Common myeloid progenitor, CD34-positive (primary cell): ENCODE measurements at regions of chr20 and their contacts with region 1.

Region 1: DNA sequence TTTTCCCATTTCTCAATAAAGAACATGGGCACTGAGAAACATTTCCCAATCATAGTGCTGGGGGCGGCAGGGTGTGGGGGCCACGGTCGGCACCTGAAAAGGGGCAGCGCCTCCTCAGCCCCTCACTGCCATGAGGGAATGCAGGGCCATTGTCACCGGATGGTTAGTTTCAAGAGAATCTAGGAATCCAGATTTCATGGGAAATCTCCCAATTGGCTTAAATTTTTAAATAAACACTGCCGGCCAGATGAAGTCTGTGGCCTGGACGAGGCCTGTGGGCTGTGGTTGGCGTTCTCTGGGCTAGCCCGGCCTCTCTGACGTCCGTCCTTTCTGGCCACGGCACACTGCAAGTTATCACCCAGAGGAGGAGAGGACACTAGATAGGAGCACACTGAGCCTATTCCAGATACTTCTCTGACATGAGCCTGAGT is 25.6 kb downstream of the MANBAL start:
- DNase-seq: no peak
- H3K4me3 ChIP-seq: no peak overlapping the region
- H3K27ac ChIP-seq: peak overlapping the region; percentile 52 to 82
- H3K4me1 ChIP-seq: peaks cover 6 to 55% (median 43%) of the 10 kb centered on the region in 4 experiments
- H3K27me3 ChIP-seq: no peaks in the 10 kb centered on the region

Region 2: DNA sequence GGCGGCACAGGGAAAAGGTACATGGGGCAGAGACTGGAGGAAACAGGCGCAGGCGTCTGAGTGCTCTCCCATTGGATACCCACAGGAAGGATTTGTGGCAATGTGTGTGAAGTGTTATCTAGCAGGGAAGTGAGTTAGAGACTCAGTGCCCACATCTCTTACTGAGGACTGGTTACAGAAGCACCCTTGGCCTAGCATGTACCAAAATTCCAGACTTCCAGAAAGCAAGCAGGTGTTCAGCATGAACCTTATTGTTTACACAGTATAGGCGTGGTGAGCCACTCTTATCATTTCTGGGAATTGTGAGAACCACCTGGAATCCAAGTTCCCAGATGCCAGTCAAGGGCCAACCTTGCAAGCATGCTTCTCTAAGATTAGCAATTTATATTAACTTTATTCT is 11.4 kb before region 1 on chr20:
- CTCF ChIA-PET with region 1: interaction called, 13 read pairs
- POLR2A ChIA-PET with region 1: no interaction called
- DNase-seq: no peak
- H3K4me3 ChIP-seq: no peak overlapping the region
- H3K27ac ChIP-seq: no peak overlapping the region
- H3K4me1 ChIP-seq: no peaks in the 10 kb centered on the region
- H3K27me3 ChIP-seq: no peaks in the 10 kb centered on the region

Region 3: GRCh38 chr20:37331060-37331857 is 16.2 kb after region 1 on chr20:
- CTCF ChIA-PET with region 1: interaction called, 12 read pairs
- POLR2A ChIA-PET with region 1: interaction called, 3 read pairs
- DNase-seq: no peak
- H3K4me3 ChIP-seq: no peak overlapping the region
- H3K27ac ChIP-seq: no peak overlapping the region
- H3K4me1 ChIP-seq: peaks cover 0 to 23% (median 10%) of the 10 kb centered on the region in 4 experiments
- H3K27me3 ChIP-seq: no peaks in the 10 kb centered on the region